ENCODE measurements at regions of chr5 and their contacts with region 1.

Region 1: GRCh38 chr5:172770675-172771438 is at the start of gene DUSP1:
- DNase-seq: peak; percentile 97 to 99 (median 98)
- ATAC-seq: peak; percentile 54
- H3K4me3 ChIP-seq: peak within 1 kb of the TSS; percentile 85 to 89
- H3K4me3 Mint-ChIP-seq: peak within 1 kb of the TSS; percentile 95
- H3K27ac ChIP-seq: peak within 1 kb of the TSS; percentile 99 to 100
- H3K27ac Mint-ChIP-seq: peak within 1 kb of the TSS; percentile 98
- H3K4me1 ChIP-seq: peaks cover 36% of the 10 kb centered on the region
- H3K4me1 Mint-ChIP-seq: peaks cover 58% of the 10 kb centered on the region
- H3K27me3 ChIP-seq: no peaks in the 10 kb centered on the region
- H3K27me3 Mint-ChIP-seq: no peaks in the 10 kb centered on the region
- CTCF ChIP-seq: no peak
- total RNA-seq, gene DUSP1: 745 to 767 TPM

Region 2: DNA sequence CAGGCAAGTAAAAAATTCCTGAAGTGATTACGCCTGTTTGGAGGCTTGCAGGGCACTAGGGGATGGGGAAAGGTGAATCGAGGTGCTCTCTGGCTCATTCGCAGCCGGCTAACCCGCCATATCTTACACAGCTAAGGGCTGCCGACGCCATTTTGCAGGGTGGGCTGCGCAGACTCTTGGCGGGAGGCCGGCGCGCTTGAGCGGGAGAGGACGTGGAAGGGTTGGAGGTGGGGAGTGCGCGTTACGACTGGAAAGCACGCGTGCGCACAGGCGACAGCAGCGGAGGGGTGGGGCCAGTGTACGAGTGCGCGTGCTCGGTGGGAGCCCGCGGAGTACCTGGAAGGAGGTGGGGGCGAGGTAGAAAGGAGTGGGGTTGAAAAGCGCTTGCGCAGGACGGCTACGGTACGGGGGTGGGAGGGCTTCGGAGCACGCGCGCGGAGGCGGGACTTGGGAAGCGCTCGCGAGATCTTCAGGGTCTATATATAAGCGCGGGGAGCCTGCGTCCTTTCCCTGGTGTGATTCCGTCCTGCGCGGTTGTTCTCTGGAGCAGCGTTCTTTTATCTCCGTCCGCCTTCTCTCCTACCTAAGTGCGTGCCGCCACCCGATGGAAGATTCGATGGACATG is 1383.4 kb before region 1 on chr5 and contains the start of gene NPM1:
- CTCF ChIA-PET with region 1: no interaction called
- POLR2A ChIA-PET with region 1: interaction called, 4 read pairs
- intact Hi-C with region 1: loop called in 1 of 2 experiments (anchors 10 kb)
- DNase-seq: peak; percentile 95 to 100 (median 97)
- ATAC-seq: peak; percentile 88
- H3K4me3 ChIP-seq: peak within 1 kb of the TSS; percentile 92 to 96
- H3K4me3 Mint-ChIP-seq: peak within 1 kb of the TSS; percentile 96
- H3K27ac ChIP-seq: peak within 1 kb of the TSS; percentile 94 to 97
- H3K27ac Mint-ChIP-seq: peak within 1 kb of the TSS; percentile 99
- H3K4me1 ChIP-seq: peaks cover 45% of the 10 kb centered on the region
- H3K4me1 Mint-ChIP-seq: peaks cover 46% of the 10 kb centered on the region
- H3K27me3 ChIP-seq: no peaks in the 10 kb centered on the region
- H3K27me3 Mint-ChIP-seq: peaks cover 3% of the 10 kb centered on the region
- CTCF ChIP-seq: no peak
- total RNA-seq, gene NPM1: 1,297 to 1,299 TPM

Region 3: GRCh38 chr5:172114875-172115422 is 655.9 kb before region 1 on chr5:
- CTCF ChIA-PET with region 1: no interaction called
- POLR2A ChIA-PET with region 1: no interaction called
- intact Hi-C with region 1: loop called (anchors 2 to 5 kb)
- DNase-seq: peak; percentile 37 to 91 (median 67)
- ATAC-seq: peak; percentile 35
- H3K4me3 ChIP-seq: peak overlapping the region; percentile 13 to 30
- H3K4me3 Mint-ChIP-seq: peak overlapping the region; percentile 77
- H3K27ac ChIP-seq: peak overlapping the region; percentile 45 to 83
- H3K27ac Mint-ChIP-seq: peak overlapping the region; percentile 97
- H3K4me1 ChIP-seq: peaks cover 89% of the 10 kb centered on the region
- H3K4me1 Mint-ChIP-seq: peaks cover 83% of the 10 kb centered on the region
- H3K27me3 ChIP-seq: no peaks in the 10 kb centered on the region
- H3K27me3 Mint-ChIP-seq: no peaks in the 10 kb centered on the region
- CTCF ChIP-seq: no peak

Region 4: DNA sequence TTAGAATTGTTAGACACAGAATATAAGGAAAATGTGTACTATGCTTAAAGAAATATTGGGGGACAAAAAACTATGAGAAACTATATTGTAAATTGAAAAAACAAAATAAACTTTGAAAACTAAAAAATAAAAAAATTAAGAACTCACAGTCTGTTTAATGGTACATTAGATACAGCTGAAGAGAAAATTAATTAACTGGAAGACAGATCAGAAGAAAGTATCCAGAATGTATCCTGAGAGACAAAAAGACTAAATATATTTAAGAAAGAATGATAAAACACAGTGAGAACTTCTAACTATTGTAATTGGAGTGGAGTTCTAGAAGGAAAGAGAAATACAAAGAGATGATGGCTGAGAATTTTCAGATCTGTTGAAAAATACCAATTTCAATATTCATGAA is 258.9 kb before region 1 on chr5:
- CTCF ChIA-PET with region 1: no interaction called
- POLR2A ChIA-PET with region 1: no interaction called
- intact Hi-C with region 1: no loop called
- DNase-seq: no peak
- ATAC-seq: no peak
- H3K4me3 ChIP-seq: no peak overlapping the region
- H3K4me3 Mint-ChIP-seq: no peak overlapping the region
- H3K27ac ChIP-seq: no peak overlapping the region
- H3K27ac Mint-ChIP-seq: no peak overlapping the region
- H3K4me1 ChIP-seq: no peaks in the 10 kb centered on the region
- H3K4me1 Mint-ChIP-seq: no peaks in the 10 kb centered on the region
- H3K27me3 ChIP-seq: no peaks in the 10 kb centered on the region
- H3K27me3 Mint-ChIP-seq: peaks cover 37% of the 10 kb centered on the region
- CTCF ChIP-seq: no peak

Region 5: GRCh38 chr5:172833686-172834414 is 63.0 kb after region 1 on chr5 and contains the start of gene ERGIC1:
- CTCF ChIA-PET with region 1: interaction called, 16 read pairs
- POLR2A ChIA-PET with region 1: interaction called, 39 read pairs
- intact Hi-C with region 1: loop called (anchors 1 to 2 kb)
- DNase-seq: peak in 8 of 9 experiments; percentile 58 to 84 (median 72)
- ATAC-seq: peak; percentile 74
- H3K4me3 ChIP-seq: peak within 1 kb of the TSS; percentile 67 to 81
- H3K4me3 Mint-ChIP-seq: peak within 1 kb of the TSS; percentile 86
- H3K27ac ChIP-seq: peak within 1 kb of the TSS; percentile 67 to 88
- H3K27ac Mint-ChIP-seq: peak within 1 kb of the TSS; percentile 92
- H3K4me1 ChIP-seq: peaks cover 44% of the 10 kb centered on the region
- H3K4me1 Mint-ChIP-seq: peaks cover 44% of the 10 kb centered on the region
- H3K27me3 ChIP-seq: no peaks in the 10 kb centered on the region
- H3K27me3 Mint-ChIP-seq: no peaks in the 10 kb centered on the region
- CTCF ChIP-seq: no peak
- total RNA-seq, gene ERGIC1: 61.0 to 61.2 TPM

Region 6: DNA sequence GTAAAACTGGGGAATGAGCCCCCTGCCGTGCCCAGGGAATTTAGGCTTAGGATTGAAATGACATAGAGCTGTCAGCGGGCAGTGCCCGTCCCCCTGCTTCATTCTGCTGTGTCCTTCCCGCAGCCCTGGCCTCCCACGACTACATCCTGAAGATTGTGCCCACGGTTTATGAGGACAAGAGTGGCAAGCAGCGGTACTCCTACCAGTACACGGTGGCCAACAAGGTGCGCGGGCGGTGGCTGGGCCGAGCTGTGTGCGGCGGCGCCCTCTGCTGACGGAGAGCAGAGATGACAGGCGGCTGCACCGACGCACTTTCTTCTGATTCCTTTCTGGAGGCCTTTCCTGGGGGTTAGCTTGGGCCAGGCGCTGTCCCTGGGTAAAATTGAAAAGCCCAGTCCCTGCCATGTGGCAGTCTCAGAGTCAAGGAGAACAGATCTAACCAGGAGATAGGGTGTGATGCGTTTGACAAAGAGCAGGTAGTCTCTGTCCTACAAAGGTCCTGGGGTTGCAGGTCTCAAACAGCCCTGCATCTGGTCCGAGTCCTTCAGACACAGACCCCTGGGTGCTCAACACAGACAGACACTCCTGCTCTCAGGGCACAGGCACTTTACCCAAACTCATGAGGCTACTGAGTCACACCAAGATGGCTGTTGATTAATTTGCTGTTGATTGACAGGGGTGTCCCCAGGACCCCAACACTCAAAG is 161.6 kb after region 1 on chr5:
- CTCF ChIA-PET with region 1: interaction called, 75 read pairs
- POLR2A ChIA-PET with region 1: interaction called, 9 read pairs
- intact Hi-C with region 1: loop called (anchors 1 to 2 kb)
- DNase-seq: peak; percentile 59 to 86 (median 75)
- ATAC-seq: peak; percentile 100
- H3K4me3 ChIP-seq: no peak overlapping the region
- H3K4me3 Mint-ChIP-seq: no peak overlapping the region
- H3K27ac ChIP-seq: no peak overlapping the region
- H3K27ac Mint-ChIP-seq: peak overlapping the region; percentile 67
- H3K4me1 ChIP-seq: no peaks in the 10 kb centered on the region
- H3K4me1 Mint-ChIP-seq: peaks cover 7% of the 10 kb centered on the region
- H3K27me3 ChIP-seq: no peaks in the 10 kb centered on the region
- H3K27me3 Mint-ChIP-seq: no peaks in the 10 kb centered on the region
- CTCF ChIP-seq: peak; percentile 97